T-cell (primary cell): ENCODE measurements at regions of chr4 and their contacts with region 1.

Region 1: GRCh38 chr4:70901984-70902576 is at the start of gene MOB1B:
- DNase-seq: peak; percentile 65 to 90 (median 82)
- ATAC-seq: peak; percentile 95 to 97 (median 96)
- H3K4me3 ChIP-seq: peak within 1 kb of the TSS; percentile 63 to 94
- H3K4me3 Mint-ChIP-seq: peak within 1 kb of the TSS; percentile 94 to 99 (median 98)
- H3K27ac ChIP-seq: peak within 1 kb of the TSS; percentile 39
- H3K27ac Mint-ChIP-seq: peak within 1 kb of the TSS; percentile 84 to 85
- H3K4me1 ChIP-seq: peaks cover 2 to 18% of the 10 kb centered on the region in 2 experiments
- H3K4me1 Mint-ChIP-seq: peaks cover 37 to 39% (median 38%) of the 10 kb centered on the region in 3 donors
- H3K27me3 ChIP-seq: peaks cover 0 to 4% of the 10 kb centered on the region in 2 experiments
- H3K27me3 Mint-ChIP-seq: no peaks in the 10 kb centered on the region
- total RNA-seq, gene MOB1B: 10.7 to 16.0 (median 11.2) TPM

Region 2: GRCh38 chr4:70833675-70834074 is 68.4 kb before region 1 on chr4:
- CTCF ChIA-PET with region 1: interaction called in 1 of 2 experiments, 13 read pairs
- POLR2A ChIA-PET with region 1: no interaction called
- DNase-seq: no peak
- ATAC-seq: no peak
- H3K4me3 ChIP-seq: no peak overlapping the region
- H3K4me3 Mint-ChIP-seq: no peak overlapping the region
- H3K27ac ChIP-seq: no peak overlapping the region
- H3K27ac Mint-ChIP-seq: no peak overlapping the region
- H3K4me1 ChIP-seq: peaks cover 13 to 25% of the 10 kb centered on the region in 2 experiments
- H3K4me1 Mint-ChIP-seq: peaks cover 31 to 44% (median 37%) of the 10 kb centered on the region in 3 donors
- H3K27me3 ChIP-seq: no peaks in the 10 kb centered on the region
- H3K27me3 Mint-ChIP-seq: no peaks in the 10 kb centered on the region

Region 3: GRCh38 chr4:70948665-70949260 is 46.7 kb after region 1 on chr4:
- CTCF ChIA-PET with region 1: interaction called in 1 of 2 experiments, 10 read pairs
- POLR2A ChIA-PET with region 1: no interaction called
- DNase-seq: no peak
- ATAC-seq: no peak
- H3K4me3 ChIP-seq: no peak overlapping the region
- H3K4me3 Mint-ChIP-seq: no peak overlapping the region
- H3K27ac ChIP-seq: no peak overlapping the region
- H3K27ac Mint-ChIP-seq: no peak overlapping the region
- H3K4me1 ChIP-seq: no peaks in the 10 kb centered on the region
- H3K4me1 Mint-ChIP-seq: peaks cover 16 to 22% (median 16%) of the 10 kb centered on the region in 3 donors
- H3K27me3 ChIP-seq: no peaks in the 10 kb centered on the region
- H3K27me3 Mint-ChIP-seq: no peaks in the 10 kb centered on the region

Region 4: GRCh38 chr4:70958681-70959080 is 56.6 kb after region 1 on chr4:
- CTCF ChIA-PET with region 1: interaction called in 1 of 2 experiments, 5 read pairs
- POLR2A ChIA-PET with region 1: interaction called in 1 of 2 experiments, 16 read pairs
- DNase-seq: no peak
- ATAC-seq: no peak
- H3K4me3 ChIP-seq: no peak overlapping the region
- H3K4me3 Mint-ChIP-seq: no peak overlapping the region
- H3K27ac ChIP-seq: no peak overlapping the region
- H3K27ac Mint-ChIP-seq: no peak overlapping the region
- H3K4me1 ChIP-seq: no peaks in the 10 kb centered on the region
- H3K4me1 Mint-ChIP-seq: peaks cover 2 to 7% (median 7%) of the 10 kb centered on the region in 3 donors
- H3K27me3 ChIP-seq: no peaks in the 10 kb centered on the region
- H3K27me3 Mint-ChIP-seq: no peaks in the 10 kb centered on the region